Testis (tissue), 5 donors: ENCODE measurements at regions of chr14 and their contacts with region 1.

Region 1: GRCh38 chr14:104639889-104640548 is 35.4 kb upstream of the TMEM179 start:
- DNase-seq: peak; percentile 71
- H3K4me3 ChIP-seq: no peak overlapping the region
- H3K27ac ChIP-seq: no peak overlapping the region
- H3K4me1 ChIP-seq: no peaks in the 10 kb centered on the region
- H3K27me3 ChIP-seq: no peaks in the 10 kb centered on the region
- CTCF ChIP-seq: peak; percentile 60 to 76 (median 75)
- POLR2A ChIP-seq: no peak

Region 2: GRCh38 chr14:104149617-104150135 is 490.3 kb before region 1 on chr14:
- intact Hi-C with region 1: loop called (anchors 10 kb)
- DNase-seq: no peak
- H3K4me3 ChIP-seq: no peak overlapping the region
- H3K27ac ChIP-seq: no peak overlapping the region
- H3K4me1 ChIP-seq: no peaks in the 10 kb centered on the region
- H3K27me3 ChIP-seq: no peaks in the 10 kb centered on the region
- CTCF ChIP-seq: no peak
- POLR2A ChIP-seq: no peak

Region 3: GRCh38 chr14:104794099-104794498 is 154.1 kb after region 1 on chr14:
- intact Hi-C with region 1: no loop called
- DNase-seq: peak; percentile 62
- H3K4me3 ChIP-seq: peak overlapping the region; percentile 70 to 79
- H3K27ac ChIP-seq: peak overlapping the region in 1 of 2 donors; percentile 78
- H3K4me1 ChIP-seq: peaks cover 48% of the 10 kb centered on the region
- H3K27me3 ChIP-seq: no peaks in the 10 kb centered on the region
- CTCF ChIP-seq: no peak
- POLR2A ChIP-seq: no peak